ENCODE measurements at regions of chr6 and their contacts with region 1.

Region 1: DNA sequence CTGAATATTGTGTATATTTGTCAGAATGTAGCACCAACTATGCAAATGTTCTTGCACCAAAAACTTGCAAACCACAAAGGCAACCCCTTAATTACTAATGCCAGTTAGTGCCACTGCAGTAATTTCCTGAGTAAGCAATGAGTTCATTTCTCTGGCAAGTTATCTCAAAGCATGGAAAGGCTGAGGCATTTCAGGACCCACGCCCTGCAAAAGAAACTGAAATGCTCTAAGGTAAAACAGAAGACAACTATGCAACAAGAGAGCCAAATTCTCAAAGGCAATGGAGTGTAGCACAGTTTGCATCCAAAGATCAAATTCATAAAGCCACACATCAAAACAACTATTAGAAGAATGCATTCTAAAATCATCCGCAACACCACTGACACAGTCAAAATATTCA is 994.4 kb downstream of the EYS start:
- DNase-seq: no peak
- ATAC-seq: no peak
- H3K4me3 ChIP-seq: no peak overlapping the region
- H3K27ac ChIP-seq: no peak overlapping the region
- H3K4me1 ChIP-seq: no peaks in the 10 kb centered on the region
- H3K27me3 ChIP-seq: no peaks in the 10 kb centered on the region
- CTCF ChIP-seq: no peak

Region 2: DNA sequence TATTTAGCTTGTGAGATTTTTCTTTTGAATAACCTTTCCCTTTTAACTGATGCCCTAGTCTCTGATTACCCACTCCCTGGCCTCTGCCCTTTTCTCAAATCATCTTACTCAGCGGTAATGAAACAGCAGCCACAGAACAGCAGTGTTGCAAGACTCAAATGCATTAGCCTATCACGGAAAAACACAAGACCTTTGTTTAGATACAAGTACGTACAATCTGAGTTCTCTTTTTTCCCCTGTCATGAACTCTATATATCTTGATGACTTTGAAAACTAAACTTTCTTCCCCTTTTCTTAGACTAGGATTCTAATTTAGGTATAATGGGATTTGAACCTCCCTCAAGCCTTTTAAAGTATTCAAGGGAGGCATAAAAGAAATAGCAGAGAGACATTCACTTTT is 40.5 kb before region 1 on chr6:
- CTCF ChIA-PET with region 1: interaction called, 15 read pairs
- POLR2A ChIA-PET with region 1: no interaction called
- in situ Hi-C with region 1: no loop called
- intact Hi-C with region 1: no loop called
- DNase-seq: no peak
- ATAC-seq: no peak
- H3K4me3 ChIP-seq: no peak overlapping the region
- H3K27ac ChIP-seq: no peak overlapping the region
- H3K4me1 ChIP-seq: no peaks in the 10 kb centered on the region
- H3K27me3 ChIP-seq: no peaks in the 10 kb centered on the region
- CTCF ChIP-seq: no peak

Region 3: GRCh38 chr6:64815718-64816117 is 103.1 kb after region 1 on chr6:
- CTCF ChIA-PET with region 1: no interaction called
- POLR2A ChIA-PET with region 1: no interaction called
- in situ Hi-C with region 1: no loop called
- intact Hi-C with region 1: no loop called
- DNase-seq: no peak
- ATAC-seq: no peak
- H3K4me3 ChIP-seq: no peak overlapping the region
- H3K27ac ChIP-seq: no peak overlapping the region
- H3K4me1 ChIP-seq: no peaks in the 10 kb centered on the region
- H3K27me3 ChIP-seq: no peaks in the 10 kb centered on the region
- CTCF ChIP-seq: no peak